ENCODE measurements at regions of chr10 and their contacts with region 1.

Region 1: DNA sequence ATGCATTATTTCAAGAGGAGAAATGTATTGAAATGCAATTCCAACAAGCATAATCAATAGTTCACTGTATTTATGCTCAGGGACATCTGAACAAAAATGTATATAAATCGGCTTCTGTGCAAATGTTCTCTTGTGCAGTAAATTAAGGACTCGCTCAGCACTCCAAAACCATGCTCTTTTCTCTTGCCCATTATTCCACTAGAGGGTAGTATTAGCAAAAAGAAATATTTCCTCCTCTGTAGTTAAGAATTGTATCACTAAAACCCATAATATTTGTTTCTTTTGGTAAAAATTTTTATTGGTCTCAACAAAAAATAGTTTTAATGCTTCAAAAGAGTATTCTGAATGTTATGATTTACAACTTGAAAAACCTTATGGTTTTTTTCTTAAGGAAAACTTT is 803.1 kb downstream of the PCDH15 start:
- DNase-seq: no peak
- H3K4me3 ChIP-seq: no peak overlapping the region
- H3K27ac ChIP-seq: no peak overlapping the region
- H3K27me3 ChIP-seq: peaks cover 0 to 5% (median 0%) of the 10 kb centered on the region in 45 donors
- CTCF ChIP-seq: peak in 55 of 56 donors; percentile 32 to 77 (median 57)

Region 2: GRCh38 chr10:53939654-53940053 is 58.3 kb before region 1 on chr10:
- intact Hi-C with region 1: no loop called
- DNase-seq: no peak
- H3K4me3 ChIP-seq: no peak overlapping the region
- H3K27ac ChIP-seq: no peak overlapping the region
- H3K27me3 ChIP-seq: no peaks in the 10 kb centered on the region
- CTCF ChIP-seq: no peak

Region 3: DNA sequence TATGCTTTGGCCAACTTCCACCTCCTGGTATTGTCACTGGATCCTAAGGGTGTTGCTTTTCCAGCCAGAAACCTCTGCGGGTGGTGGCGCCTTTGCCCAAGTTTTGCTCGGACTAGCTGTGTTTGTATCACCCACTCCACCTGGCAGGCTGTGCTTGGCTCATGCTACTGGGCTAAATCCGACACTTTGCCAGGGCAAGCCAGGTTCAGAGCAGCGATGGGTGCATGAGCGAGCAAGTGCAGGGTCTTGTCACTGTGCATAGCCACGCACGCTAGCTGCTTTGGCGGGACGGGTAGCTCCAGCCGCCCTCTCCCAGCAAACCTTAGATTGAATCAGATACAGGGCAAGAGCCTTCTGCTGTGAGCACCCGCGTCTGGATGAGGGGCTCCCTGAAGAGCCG is 65.6 kb after region 1 on chr10:
- intact Hi-C with region 1: no loop called
- DNase-seq: no peak
- H3K4me3 ChIP-seq: no peak overlapping the region
- H3K27ac ChIP-seq: no peak overlapping the region
- H3K27me3 ChIP-seq: no peaks in the 10 kb centered on the region
- CTCF ChIP-seq: no peak

Region 4: DNA sequence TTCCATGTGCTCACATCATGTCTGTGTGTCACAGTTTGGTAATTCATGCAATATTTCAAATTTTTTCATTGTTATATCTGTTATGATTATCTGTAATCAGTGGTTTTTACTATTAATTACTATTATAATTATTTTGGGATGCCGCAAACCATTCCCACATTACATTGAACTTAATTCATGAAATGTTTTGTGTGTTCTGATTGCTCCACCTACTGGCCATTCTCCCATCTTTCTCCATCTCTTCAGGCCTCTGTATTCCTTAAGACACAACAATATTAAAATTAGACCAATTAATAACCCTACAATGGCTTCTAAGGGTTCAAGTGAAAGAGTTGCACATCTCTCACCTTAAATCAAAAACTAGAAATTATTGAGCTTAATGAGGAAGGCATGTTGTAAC is 404.6 kb after region 1 on chr10:
- intact Hi-C with region 1: loop called in 1 of 2 experiments (anchors 10 kb)
- DNase-seq: no peak
- H3K4me3 ChIP-seq: no peak overlapping the region
- H3K27ac ChIP-seq: no peak overlapping the region
- H3K27me3 ChIP-seq: peaks cover 0 to 7% (median 0%) of the 10 kb centered on the region in 45 donors
- CTCF ChIP-seq: peak; percentile 15 to 79 (median 58)